Tibial artery (tissue), 4 donors: ENCODE measurements at regions of chr12 and their contacts with region 1.

Region 1: GRCh38 chr12:93569656-93570551 is 2.6 kb upstream of the SOCS2 start:
- DNase-seq: peak; percentile 78 to 94
- H3K4me3 ChIP-seq: peak overlapping the region; percentile 73 to 77
- H3K27ac ChIP-seq: peak overlapping the region; percentile 45 to 86
- H3K4me1 ChIP-seq: peaks cover 0 to 29% (median 18%) of the 10 kb centered on the region in 4 donors
- H3K27me3 ChIP-seq: peaks cover 0 to 24% of the 10 kb centered on the region in 2 donors
- CTCF ChIP-seq: peak; percentile 80 to 84

Region 2: DNA sequence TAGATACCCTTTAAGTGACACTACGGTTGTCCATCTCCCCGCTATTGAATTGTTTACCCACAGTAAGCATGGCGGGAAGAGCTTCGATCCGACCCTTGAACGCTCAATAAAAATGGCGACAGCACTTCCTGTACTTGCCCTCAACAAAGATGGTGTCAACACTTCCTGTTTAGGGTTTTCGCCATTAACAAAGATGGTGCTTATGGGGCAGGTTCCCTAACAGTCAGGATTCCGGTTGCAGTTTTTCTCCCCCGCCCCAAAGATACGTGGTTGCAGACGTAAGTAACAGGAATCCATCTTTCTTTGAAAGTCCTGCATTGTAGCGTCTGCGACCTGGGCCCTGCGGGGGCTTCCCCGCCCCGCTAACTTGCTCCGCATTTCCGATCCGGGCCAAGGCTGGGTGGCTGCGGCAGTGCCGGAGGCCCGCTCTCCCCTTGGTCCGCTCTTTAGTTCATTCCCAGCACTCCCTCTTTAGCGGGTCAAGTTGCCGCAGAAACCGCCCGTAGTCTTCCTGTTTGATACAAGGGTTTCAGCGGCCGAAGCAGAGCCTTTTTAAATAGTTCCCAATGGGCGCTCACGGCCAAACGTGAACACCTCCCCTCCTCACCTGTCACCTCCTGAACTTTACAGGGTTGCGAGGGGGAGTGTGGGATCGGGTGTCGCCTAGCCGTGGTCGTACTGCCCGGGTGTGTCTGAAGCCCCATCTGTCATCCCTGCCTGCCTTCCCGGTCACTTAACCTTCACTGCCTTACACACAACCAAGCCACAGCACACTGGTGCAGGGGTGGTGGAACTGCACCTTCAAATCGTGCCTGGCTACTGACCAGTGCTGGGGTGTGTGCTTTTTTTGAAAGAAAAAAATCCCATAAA is 107.5 kb after region 1 on chr12 and contains the start of gene CRADD:
- intact Hi-C with region 1: loop called (anchors 5 kb)
- DNase-seq: peak; percentile 89 to 92
- H3K4me3 ChIP-seq: peak within 1 kb of the TSS; percentile 69 to 78
- H3K27ac ChIP-seq: peak within 1 kb of the TSS; percentile 93 to 97
- H3K4me1 ChIP-seq: peaks cover 0 to 31% (median 12%) of the 10 kb centered on the region in 4 donors
- H3K27me3 ChIP-seq: no peaks in the 10 kb centered on the region
- CTCF ChIP-seq: peak in 1 of 2 experiments; percentile 18

Region 3: GRCh38 chr12:93766796-93767523 is 197.1 kb after region 1 on chr12:
- intact Hi-C with region 1: loop called (anchors 10 kb)
- DNase-seq: peak in 1 of 2 donors; percentile 32
- H3K4me3 ChIP-seq: no peak overlapping the region
- H3K27ac ChIP-seq: peak overlapping the region; percentile 15 to 23
- H3K4me1 ChIP-seq: peaks cover 0 to 9% (median 3%) of the 10 kb centered on the region in 4 donors
- H3K27me3 ChIP-seq: no peaks in the 10 kb centered on the region
- CTCF ChIP-seq: peak; percentile 59 to 64

Region 4: GRCh38 chr12:94074980-94075928 is 505.4 kb after region 1 on chr12:
- intact Hi-C with region 1: loop called (anchors 2 kb)
- DNase-seq: peak; percentile 80 to 88
- H3K4me3 ChIP-seq: peak overlapping the region in 1 of 2 donors; percentile 23
- H3K27ac ChIP-seq: peak overlapping the region; percentile 65 to 78
- H3K4me1 ChIP-seq: peaks cover 0 to 27% (median 16%) of the 10 kb centered on the region in 4 donors
- H3K27me3 ChIP-seq: no peaks in the 10 kb centered on the region
- CTCF ChIP-seq: peak; percentile 67 to 71